Activated B cell treated with CpG ODN at 0.5 μM for 24 hours (primary cell): ENCODE measurements at regions of chr9 and their contacts with region 1.

Region 1: DNA sequence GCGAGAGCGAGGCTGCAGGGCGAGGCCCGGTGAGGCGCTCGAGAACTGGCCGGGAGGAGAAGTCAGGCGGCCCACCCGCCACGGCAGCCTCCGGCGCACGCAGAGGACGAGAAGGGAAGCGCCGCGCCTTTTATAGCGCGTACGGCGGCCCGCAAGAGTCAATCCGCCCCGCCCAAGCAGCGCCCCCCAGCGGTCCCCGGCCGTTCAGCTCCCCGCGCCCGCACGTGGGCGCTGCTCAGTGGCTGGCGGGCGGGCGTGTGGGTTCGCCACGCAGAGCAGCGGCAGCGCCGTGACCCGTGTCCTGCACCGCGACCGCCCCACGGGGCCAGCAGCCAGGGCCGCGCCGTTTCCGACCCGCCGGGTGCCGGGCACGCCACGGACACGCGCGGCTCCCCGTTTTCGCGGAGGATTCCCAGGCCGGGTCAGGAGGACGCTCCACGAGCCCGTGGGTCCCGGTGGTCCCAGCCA is 14.6 kb downstream of the LCN10 start:
- DNase-seq: peak; percentile 97
- ATAC-seq: peak; percentile 80
- H3K4me3 Mint-ChIP-seq: peak overlapping the region; percentile 95
- H3K27ac Mint-ChIP-seq: peak overlapping the region; percentile 66
- H3K4me1 Mint-ChIP-seq: peaks cover 39% of the 10 kb centered on the region
- H3K27me3 Mint-ChIP-seq: no peaks in the 10 kb centered on the region
- CTCF ChIP-seq: peak; percentile 51

Region 2: GRCh38 chr9:136599811-136600660 is 128.1 kb before region 1 on chr9:
- CTCF ChIA-PET with region 1: no interaction called
- POLR2A ChIA-PET with region 1: no interaction called
- intact Hi-C with region 1: no loop called
- DNase-seq: no peak
- ATAC-seq: no peak
- H3K4me3 Mint-ChIP-seq: no peak overlapping the region
- H3K27ac Mint-ChIP-seq: no peak overlapping the region
- H3K4me1 Mint-ChIP-seq: peaks cover 3% of the 10 kb centered on the region
- H3K27me3 Mint-ChIP-seq: peaks cover 9% of the 10 kb centered on the region
- CTCF ChIP-seq: no peak

Region 3: DNA sequence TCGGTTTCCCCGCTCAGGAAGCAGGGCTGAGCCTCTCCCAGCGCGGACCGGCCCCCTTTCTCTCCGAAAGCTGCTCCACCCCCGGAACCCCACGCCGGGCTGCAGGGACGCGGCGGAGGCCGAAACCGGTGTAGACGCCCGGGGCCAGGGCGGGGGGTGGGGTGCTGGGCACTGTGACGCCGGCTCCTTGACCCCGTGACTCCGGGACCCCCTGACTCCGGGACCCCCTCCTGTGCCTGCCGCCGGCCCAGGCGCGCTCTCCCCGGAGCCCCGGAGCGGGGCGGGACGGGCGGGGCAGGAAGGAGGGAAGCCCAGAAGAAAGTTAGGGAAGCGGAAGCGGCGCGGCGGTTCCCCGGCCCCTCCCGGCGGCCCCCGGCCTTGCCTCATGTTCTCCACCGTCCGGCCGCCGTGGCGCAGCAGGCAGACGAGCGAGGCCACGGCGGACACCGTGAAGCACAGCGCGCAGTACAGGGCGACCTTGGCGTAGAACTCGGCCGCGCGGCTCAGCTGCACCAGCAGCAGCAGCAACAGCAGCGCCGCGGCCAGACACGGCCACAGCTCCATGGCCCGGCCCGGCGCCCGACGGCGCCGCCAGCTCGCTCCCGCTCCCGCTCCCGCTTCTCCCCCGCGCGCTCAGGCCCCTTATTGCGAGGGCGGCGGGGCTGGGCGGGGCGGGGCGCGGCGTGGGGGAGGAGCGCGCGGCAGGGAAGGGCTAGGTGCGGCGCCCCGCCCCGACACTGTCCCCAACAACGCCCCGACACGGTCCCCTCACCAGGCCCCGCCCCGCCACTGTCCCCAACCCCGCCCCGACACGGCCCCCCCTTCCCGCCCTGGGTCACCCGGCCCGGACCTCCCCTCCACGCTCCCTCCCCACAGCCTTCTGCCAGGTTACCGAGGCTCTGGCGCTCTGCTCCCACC is 41.1 kb before region 1 on chr9 and contains the start of gene AGPAT2:
- CTCF ChIA-PET with region 1: no interaction called
- POLR2A ChIA-PET with region 1: interaction called, 20 read pairs
- intact Hi-C with region 1: loop called (anchors 5 kb)
- DNase-seq: peak; percentile 64
- ATAC-seq: peak; percentile 94
- H3K4me3 Mint-ChIP-seq: peak within 1 kb of the TSS; percentile 78
- H3K27ac Mint-ChIP-seq: peak within 1 kb of the TSS; percentile 59
- H3K4me1 Mint-ChIP-seq: peaks cover 10% of the 10 kb centered on the region
- H3K27me3 Mint-ChIP-seq: no peaks in the 10 kb centered on the region
- CTCF ChIP-seq: no peak
- total RNA-seq, gene AGPAT2: 16.6 and 17.1 TPM in 2 replicates

Region 4: DNA sequence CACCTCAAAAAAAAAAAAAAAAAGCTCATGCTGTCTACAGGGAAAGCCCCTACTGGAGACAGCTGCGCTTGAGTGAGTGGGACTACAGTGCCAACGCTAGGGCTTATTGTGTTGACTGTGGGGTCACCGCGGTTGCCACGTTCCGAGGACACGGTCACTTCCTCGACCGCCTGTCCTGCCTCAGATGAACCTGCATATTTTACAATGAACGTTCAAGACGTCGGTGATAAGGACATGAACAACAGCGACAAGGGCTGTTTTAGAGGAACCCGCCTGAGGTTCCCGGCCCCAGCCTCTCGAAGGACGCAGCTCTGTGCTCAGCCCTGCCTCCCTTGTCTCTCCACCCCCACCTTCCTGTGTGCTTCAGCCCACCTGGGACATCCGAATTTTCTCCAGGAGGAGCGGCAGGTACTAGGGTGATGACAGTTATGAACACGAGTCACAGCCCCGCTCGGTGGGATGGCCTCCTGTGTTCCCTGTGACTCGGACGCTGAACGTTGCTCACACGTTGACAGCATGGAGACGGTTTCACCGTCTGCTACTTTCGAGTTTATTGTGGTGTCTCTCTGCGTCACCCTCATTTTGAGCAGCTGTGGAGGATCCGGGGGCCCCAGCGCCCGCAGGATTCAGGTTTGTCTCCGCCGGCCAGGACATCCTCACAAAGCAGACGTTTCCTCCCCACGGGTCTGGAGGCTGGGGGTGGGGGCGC is 27.0 kb before region 1 on chr9:
- CTCF ChIA-PET with region 1: no interaction called
- POLR2A ChIA-PET with region 1: interaction called, 52 read pairs
- intact Hi-C with region 1: loop called (anchors 1 kb)
- DNase-seq: no peak
- ATAC-seq: peak; percentile 81
- H3K4me3 Mint-ChIP-seq: peak overlapping the region; percentile 78
- H3K27ac Mint-ChIP-seq: peak overlapping the region; percentile 80
- H3K4me1 Mint-ChIP-seq: peaks cover 48% of the 10 kb centered on the region
- H3K27me3 Mint-ChIP-seq: peaks cover 16% of the 10 kb centered on the region
- CTCF ChIP-seq: no peak

Region 5: DNA sequence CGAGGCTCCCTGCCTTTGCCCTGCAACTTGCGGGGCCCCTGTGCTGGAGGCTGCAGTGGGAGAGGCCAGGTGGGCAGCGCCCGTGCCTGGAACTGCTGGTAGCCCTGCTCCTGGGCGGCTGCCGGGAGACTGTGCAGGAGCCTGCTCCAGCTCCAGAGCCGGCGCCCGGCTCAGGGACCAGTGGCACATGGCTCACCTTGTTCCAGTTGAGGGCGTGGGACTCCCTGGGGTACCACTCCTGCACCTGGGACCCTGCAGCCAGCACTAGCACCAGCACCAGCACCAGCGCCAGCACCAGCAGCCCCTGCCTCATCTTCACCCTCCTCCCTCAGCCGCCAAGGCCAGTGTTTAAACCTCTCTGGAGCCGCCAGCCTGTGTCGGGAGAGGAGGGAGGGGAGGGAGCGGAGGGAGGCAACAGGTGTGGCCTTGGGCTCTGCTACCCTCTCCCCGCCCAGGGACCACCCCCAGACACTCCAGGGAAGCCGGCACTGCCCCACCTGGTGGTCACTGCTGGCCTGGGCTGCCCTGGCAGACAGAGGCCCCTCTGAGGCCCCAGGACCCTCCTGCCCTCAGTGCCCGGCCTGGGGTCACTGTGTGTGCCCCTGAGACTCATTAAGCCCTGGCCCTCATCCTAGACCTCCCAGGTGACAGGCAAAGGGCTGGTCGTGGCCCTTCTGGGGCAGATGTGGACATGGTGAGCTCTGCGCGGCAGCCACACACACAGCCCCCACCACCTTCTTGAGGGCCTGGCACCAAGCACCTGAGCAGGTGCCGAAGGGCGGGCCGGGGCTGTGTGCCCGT is 14.7 kb after region 1 on chr9 and contains the start of gene LCN10:
- CTCF ChIA-PET with region 1: interaction called, 14 read pairs
- POLR2A ChIA-PET with region 1: interaction called, 112 read pairs
- intact Hi-C with region 1: loop called (anchors 1 kb)
- DNase-seq: no peak
- ATAC-seq: no peak
- H3K4me3 Mint-ChIP-seq: peak within 1 kb of the TSS; percentile 86
- H3K27ac Mint-ChIP-seq: peak within 1 kb of the TSS; percentile 74
- H3K4me1 Mint-ChIP-seq: peaks cover 51% of the 10 kb centered on the region
- H3K27me3 Mint-ChIP-seq: no peaks in the 10 kb centered on the region
- CTCF ChIP-seq: no peak
- total RNA-seq, gene LCN10: 13.7 and 15.9 TPM in 2 replicates

Region 6: GRCh38 chr9:136757328-136757727 is 29.2 kb after region 1 on chr9:
- CTCF ChIA-PET with region 1: interaction called, 22 read pairs
- POLR2A ChIA-PET with region 1: interaction called, 132 read pairs
- intact Hi-C with region 1: loop called (anchors 2 kb)
- DNase-seq: no peak
- ATAC-seq: peak; percentile 54
- H3K4me3 Mint-ChIP-seq: peak overlapping the region; percentile 68
- H3K27ac Mint-ChIP-seq: peak overlapping the region; percentile 83
- H3K4me1 Mint-ChIP-seq: peaks cover 63% of the 10 kb centered on the region
- H3K27me3 Mint-ChIP-seq: no peaks in the 10 kb centered on the region
- CTCF ChIP-seq: no peak

Region 7: DNA sequence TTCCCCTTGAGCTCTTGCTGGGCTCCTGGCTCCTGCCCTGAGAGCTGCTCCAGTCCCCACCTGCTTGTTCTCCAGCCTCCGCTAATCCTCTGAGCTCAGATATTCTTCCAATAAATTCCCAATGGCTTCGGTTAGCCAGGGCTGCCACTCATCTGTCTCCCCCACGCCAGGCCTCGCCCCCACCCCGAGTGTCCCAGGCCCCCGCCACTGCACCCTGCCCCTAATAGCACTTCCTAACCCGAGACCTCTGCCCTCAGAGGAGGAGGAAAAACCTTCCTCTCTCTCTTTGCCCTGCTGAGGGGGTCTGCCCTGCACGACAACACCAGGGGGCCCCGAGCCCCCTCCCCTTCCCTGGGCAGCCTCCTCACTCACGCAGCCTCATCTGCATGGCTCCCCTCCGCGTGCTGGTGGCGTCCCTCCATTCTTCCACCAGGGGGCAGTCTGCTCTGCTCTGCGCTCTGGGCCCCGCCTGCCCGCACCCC is 41.6 kb after region 1 on chr9:
- CTCF ChIA-PET with region 1: no interaction called
- POLR2A ChIA-PET with region 1: interaction called, 132 read pairs
- intact Hi-C with region 1: no loop called
- DNase-seq: no peak
- ATAC-seq: no peak
- H3K4me3 Mint-ChIP-seq: no peak overlapping the region
- H3K27ac Mint-ChIP-seq: no peak overlapping the region
- H3K4me1 Mint-ChIP-seq: peaks cover 40% of the 10 kb centered on the region
- H3K27me3 Mint-ChIP-seq: peaks cover 1% of the 10 kb centered on the region
- CTCF ChIP-seq: no peak

Region 8: DNA sequence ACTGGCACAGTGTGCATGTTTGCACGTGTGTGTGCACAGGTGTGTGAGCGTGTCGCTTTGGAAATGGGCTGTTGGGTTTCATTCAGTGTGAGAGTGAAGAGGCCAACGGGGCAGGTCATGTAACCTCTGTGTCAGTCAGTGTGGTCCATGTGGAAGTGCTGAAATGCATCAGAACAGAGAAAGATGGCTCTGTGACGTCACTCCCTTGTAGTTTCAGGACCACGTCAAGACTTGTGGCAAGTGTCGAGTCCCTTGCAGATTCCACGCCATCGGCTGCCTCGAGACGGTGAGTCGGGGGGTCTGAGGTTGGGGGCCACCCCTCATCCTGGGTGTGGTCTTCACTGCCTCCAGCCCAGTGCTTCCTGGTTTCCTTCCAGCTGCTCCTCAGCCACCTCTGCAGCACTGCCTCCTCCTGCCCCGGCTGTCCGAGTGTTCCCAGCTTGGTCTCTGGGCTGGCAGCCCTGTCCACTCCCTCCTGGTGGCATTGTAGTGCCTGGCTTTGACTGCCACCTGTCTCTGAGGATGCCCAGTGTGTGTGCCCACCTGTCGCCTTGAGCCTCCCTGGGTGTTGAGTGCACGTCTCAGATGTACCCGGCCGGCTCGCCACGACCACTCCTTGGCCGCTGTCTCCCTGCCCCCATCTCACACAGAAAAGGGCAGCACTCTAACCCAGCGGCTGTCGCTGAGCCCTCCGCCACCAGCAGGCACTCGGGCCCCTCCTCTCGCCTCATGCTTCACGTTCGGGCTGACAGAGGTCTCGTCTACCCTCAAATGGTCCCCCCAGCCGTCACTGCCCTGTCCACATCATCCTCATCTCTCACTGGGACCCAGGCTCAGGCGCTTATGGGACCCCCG is 188.4 kb after region 1 on chr9:
- CTCF ChIA-PET with region 1: no interaction called
- POLR2A ChIA-PET with region 1: no interaction called
- intact Hi-C with region 1: no loop called
- DNase-seq: no peak
- ATAC-seq: no peak
- H3K4me3 Mint-ChIP-seq: no peak overlapping the region
- H3K27ac Mint-ChIP-seq: no peak overlapping the region
- H3K4me1 Mint-ChIP-seq: no peaks in the 10 kb centered on the region
- H3K27me3 Mint-ChIP-seq: no peaks in the 10 kb centered on the region
- CTCF ChIP-seq: no peak

Region 9: GRCh38 chr9:137129456-137130175 is 401.5 kb after region 1 on chr9:
- CTCF ChIA-PET with region 1: no interaction called
- POLR2A ChIA-PET with region 1: no interaction called
- intact Hi-C with region 1: no loop called
- DNase-seq: peak; percentile 88
- ATAC-seq: peak; percentile 95
- H3K4me3 Mint-ChIP-seq: peak overlapping the region; percentile 82
- H3K27ac Mint-ChIP-seq: peak overlapping the region; percentile 80
- H3K4me1 Mint-ChIP-seq: peaks cover 32% of the 10 kb centered on the region
- H3K27me3 Mint-ChIP-seq: peaks cover 2% of the 10 kb centered on the region
- CTCF ChIP-seq: no peak